ENCODE measurements at regions of chr5 and their contacts with region 1.

Region 1: DNA sequence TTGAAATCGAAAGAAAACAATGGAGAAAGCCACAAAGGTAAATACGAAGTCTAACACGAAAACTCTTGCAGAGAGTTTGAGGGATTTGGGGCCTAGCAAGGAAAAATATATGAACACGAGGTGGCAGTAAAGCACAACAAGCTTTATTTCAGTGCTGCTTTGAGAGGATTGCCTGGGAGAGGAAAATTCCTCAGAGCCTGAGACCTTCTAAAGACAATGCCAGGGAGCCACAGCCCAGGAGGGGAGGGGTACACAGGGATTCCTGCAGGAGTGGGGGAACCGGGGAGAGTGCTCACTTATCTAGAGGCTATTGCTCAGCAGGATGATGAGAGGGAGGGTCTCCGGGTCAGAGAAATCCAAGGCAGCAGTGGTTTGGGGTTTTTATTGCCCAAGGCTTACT is 134.9 kb upstream of the ADCY2 start:
- DNase-seq: no peak
- H3K4me3 Mint-ChIP-seq: no peak overlapping the region
- H3K27ac Mint-ChIP-seq: no peak overlapping the region
- H3K4me1 Mint-ChIP-seq: no peaks in the 10 kb centered on the region
- H3K27me3 Mint-ChIP-seq: peaks cover 1% of the 10 kb centered on the region

Region 2: DNA sequence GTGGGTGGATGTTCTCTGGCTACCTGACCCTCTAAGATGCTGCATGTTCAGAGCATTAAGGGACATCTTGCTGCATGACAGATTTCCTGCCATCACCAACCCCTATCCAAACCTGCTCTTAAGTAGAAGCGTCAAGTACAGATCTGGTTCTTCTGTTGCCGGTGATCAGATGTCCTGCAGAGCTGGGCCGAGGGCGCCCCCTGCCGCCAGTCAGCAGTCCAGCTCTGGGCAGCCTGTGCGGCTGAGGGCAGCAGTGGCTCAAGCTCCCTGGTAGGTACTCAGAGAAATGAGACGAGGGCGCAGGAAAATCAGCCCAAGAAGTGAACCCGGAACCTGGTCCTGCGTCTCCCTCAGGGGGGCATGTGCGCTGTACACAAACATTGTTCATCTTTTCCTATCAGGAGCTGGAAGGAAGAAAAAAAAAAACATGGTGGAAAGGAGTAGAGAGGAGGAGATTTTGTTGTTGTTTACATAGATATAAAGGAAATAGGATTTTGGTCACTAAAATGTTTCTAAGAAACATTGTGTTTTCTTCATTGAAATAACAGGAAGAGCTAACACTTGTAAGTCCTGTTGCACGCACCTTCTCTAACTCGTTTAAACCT is 494.0 kb after region 1 on chr5:
- CTCF ChIA-PET with region 1: no interaction called
- POLR2A ChIA-PET with region 1: no interaction called
- intact Hi-C with region 1: loop called (anchors 2 kb)
- DNase-seq: peak; percentile 63
- H3K4me3 Mint-ChIP-seq: no peak overlapping the region
- H3K27ac Mint-ChIP-seq: no peak overlapping the region
- H3K4me1 Mint-ChIP-seq: peaks cover 2% of the 10 kb centered on the region
- H3K27me3 Mint-ChIP-seq: peaks cover 40% of the 10 kb centered on the region

Region 3: DNA sequence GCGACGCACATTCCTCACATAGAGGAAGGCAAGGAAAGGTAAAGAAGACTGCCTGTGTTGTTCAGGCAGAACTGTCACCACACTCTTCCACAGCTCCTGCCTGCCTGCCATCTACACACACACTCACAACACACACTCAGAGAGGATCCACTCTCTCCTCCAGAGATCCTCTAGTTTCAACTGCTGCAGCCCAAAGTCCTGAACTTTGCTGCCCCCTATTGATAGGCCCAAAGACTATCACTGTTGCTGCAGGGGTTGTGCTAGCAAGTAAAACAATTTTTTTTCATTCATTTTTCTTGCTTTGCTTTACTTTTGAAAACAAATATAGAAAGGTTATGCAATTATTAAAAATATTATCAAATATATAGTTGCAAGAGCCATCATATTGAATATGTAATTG is 595.8 kb after region 1 on chr5:
- CTCF ChIA-PET with region 1: no interaction called
- POLR2A ChIA-PET with region 1: no interaction called
- intact Hi-C with region 1: loop called (anchors 2 kb)
- DNase-seq: peak; percentile 52
- H3K4me3 Mint-ChIP-seq: no peak overlapping the region
- H3K27ac Mint-ChIP-seq: no peak overlapping the region
- H3K4me1 Mint-ChIP-seq: peaks cover 28% of the 10 kb centered on the region
- H3K27me3 Mint-ChIP-seq: no peaks in the 10 kb centered on the region

Measured in activated CD4-positive, alpha-beta memory T cell treated with anti-CD3 and anti-CD28 coated beads for 36 hours (primary cell).